ENCODE measurements at regions of chr5 and their contacts with region 1.

Region 1: DNA sequence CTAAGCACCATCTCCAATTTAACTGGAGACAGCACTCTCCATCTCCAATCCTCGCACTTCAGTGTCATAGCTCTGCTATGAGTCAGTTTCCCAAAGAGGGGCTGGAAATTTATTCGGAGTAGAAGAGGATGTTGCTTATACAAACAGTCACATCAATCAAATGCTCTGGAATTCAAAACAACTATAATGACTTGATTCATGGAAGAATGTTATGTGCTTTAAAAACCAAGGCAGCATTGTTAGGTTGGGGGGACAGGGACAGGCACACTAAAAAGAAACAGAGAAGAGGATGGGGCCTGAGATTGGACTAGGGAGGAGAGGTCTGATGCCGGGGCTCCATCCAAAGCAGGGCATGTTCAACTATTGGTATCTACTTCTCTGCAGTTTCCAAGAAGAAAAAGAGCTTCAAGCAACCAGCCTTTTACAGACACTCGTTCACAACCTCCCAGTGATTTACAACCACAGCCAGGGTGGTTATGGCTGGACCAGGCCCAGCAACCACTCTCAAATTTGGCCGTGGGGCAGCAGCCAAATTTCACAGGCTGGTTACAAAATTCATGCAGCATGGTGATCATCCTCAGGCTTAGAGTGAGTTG is 117.5 kb upstream of the ZNF366 start:
- DNase-seq: peak; percentile 44 to 79
- ATAC-seq: peak; percentile 69 to 89
- H3K4me3 ChIP-seq: no peak overlapping the region
- H3K27ac ChIP-seq: peak overlapping the region; percentile 70 to 86 (median 78)
- H3K4me1 ChIP-seq: peaks cover 47 to 56% of the 10 kb centered on the region in 2 donors
- H3K27me3 ChIP-seq: no peaks in the 10 kb centered on the region
- CTCF ChIP-seq: no peak
- POLR2A ChIP-seq: no peak

Region 2: GRCh38 chr5:72572236-72572765 is 52.4 kb before region 1 on chr5:
- in situ Hi-C with region 1: no loop called
- intact Hi-C with region 1: no loop called
- DNase-seq: no peak
- ATAC-seq: no peak
- H3K4me3 ChIP-seq: no peak overlapping the region
- H3K27ac ChIP-seq: no peak overlapping the region
- H3K4me1 ChIP-seq: no peaks in the 10 kb centered on the region
- H3K27me3 ChIP-seq: no peaks in the 10 kb centered on the region
- CTCF ChIP-seq: no peak
- POLR2A ChIP-seq: no peak

Region 3: GRCh38 chr5:72597456-72597948 is 27.2 kb before region 1 on chr5:
- in situ Hi-C with region 1: no loop called
- intact Hi-C with region 1: no loop called
- DNase-seq: peak in 1 of 2 donors; percentile 48
- ATAC-seq: peak; percentile 93 to 96
- H3K4me3 ChIP-seq: peak overlapping the region in 2 of 4 donors; percentile 2 to 35
- H3K27ac ChIP-seq: peak overlapping the region; percentile 64 to 80 (median 78)
- H3K4me1 ChIP-seq: peaks cover 13 to 21% of the 10 kb centered on the region in 2 donors
- H3K27me3 ChIP-seq: no peaks in the 10 kb centered on the region
- CTCF ChIP-seq: no peak
- POLR2A ChIP-seq: no peak

Region 4: GRCh38 chr5:72692651-72693442 is 68.1 kb after region 1 on chr5:
- in situ Hi-C with region 1: no loop called
- intact Hi-C with region 1: no loop called
- DNase-seq: no peak
- ATAC-seq: peak in 1 of 2 donors; percentile 33
- H3K4me3 ChIP-seq: no peak overlapping the region
- H3K27ac ChIP-seq: no peak overlapping the region
- H3K4me1 ChIP-seq: peaks cover 0 to 5% of the 10 kb centered on the region in 2 donors
- H3K27me3 ChIP-seq: no peaks in the 10 kb centered on the region
- CTCF ChIP-seq: no peak
- POLR2A ChIP-seq: no peak

Region 5: DNA sequence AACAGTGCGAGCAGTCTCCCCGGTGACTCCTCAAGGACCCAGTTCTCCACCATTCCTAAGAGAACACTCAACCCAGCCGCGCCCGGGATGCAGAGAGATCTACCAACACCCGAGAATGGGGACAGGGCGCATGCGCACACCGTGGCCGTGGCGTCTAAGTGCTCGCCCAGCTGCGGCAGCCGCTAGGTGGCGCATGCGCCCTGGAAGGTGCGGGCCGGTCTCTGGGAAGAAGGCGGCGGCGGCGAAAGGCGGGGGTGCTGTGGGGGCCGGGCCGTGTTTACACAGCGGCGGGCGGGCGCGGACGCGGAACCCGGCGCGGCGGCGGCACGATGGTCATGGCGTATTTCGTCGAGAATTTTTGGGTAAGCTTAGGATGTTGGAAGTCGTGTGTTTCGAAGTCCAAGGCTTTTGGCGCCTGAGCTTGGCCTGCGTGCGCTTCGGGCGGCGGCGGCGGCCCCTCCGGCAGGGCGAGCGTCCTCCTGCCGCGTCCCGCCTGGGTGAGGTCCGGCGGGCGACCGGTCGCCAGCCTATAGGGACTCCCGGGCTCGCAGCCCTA is 331.1 kb after region 1 on chr5 and contains the start of gene FCHO2:
- in situ Hi-C with region 1: loop called in 1 of 4 experiments (anchors 25 kb)
- intact Hi-C with region 1: loop called (anchors 5 kb)
- DNase-seq: peak; percentile 96 to 97
- ATAC-seq: peak; percentile 89 to 90
- H3K4me3 ChIP-seq: peak within 1 kb of the TSS; percentile 71 to 85 (median 80)
- H3K27ac ChIP-seq: peak within 1 kb of the TSS; percentile 92 to 97 (median 96)
- H3K4me1 ChIP-seq: peaks cover 41 to 43% of the 10 kb centered on the region in 2 donors
- H3K27me3 ChIP-seq: no peaks in the 10 kb centered on the region
- CTCF ChIP-seq: peak; percentile 72 to 93 (median 87)
- POLR2A ChIP-seq: peak; percentile 62 to 79
- total RNA-seq, gene FCHO2: 8.3 to 14.8 (median 12.3) TPM

Measured in gastrocnemius medialis (tissue), 4 donors.